ENCODE measurements at regions of chr1 and their contacts with region 1.

Region 1: GRCh38 chr1:70528590-70529333 is 117.7 kb downstream of the CTH start:
- DNase-seq: peak; percentile 20
- H3K4me3 ChIP-seq: no peak overlapping the region
- H3K27ac ChIP-seq: no peak overlapping the region
- H3K4me1 ChIP-seq: no peaks in the 10 kb centered on the region
- H3K27me3 ChIP-seq: no peaks in the 10 kb centered on the region
- CTCF ChIP-seq: peak; percentile 47 to 72

Region 2: DNA sequence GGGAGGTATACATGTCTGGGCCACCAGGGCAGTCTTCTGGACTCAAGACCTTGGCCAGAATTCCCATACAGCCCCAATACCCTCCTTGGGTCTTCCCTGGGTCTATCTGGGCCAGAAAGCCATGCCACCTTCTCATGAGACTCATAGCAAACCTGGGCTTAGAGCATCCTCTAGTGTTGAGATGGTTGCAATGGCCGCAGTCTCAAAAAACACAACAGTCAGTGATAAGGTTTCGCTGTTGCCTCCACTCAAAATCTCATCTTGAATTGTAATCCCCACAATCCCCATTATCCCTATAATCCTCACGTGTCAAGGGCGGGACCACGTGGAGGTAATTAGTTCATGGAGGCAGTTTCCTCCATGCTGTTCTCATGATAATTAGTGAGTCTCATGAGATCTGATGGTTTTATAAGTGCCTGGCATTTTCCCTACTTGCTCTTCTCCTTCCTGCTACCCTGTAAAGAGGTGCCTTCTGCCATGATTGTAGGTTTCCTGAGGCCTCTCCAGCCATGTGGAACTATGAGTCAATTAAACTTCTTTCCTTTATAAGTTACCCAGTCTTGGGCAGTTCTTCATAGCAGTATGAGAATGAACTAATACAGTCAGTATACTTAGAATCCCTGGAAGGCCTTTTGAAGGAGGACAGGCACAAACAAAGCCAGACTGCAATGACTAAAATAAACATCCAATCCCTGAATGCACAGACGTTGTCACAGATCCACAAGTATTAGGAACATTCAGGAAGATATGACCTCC is 40.7 kb before region 1 on chr1:
- CTCF ChIA-PET with region 1: no interaction called
- dilution Hi-C with region 1: no loop called
- in situ Hi-C with region 1: no loop called
- intact Hi-C with region 1: no loop called
- DNase-seq: peak; percentile 33
- H3K4me3 ChIP-seq: no peak overlapping the region
- H3K27ac ChIP-seq: no peak overlapping the region
- H3K4me1 ChIP-seq: peaks cover 19% of the 10 kb centered on the region
- H3K27me3 ChIP-seq: no peaks in the 10 kb centered on the region
- CTCF ChIP-seq: peak; percentile 84 to 85

Region 3: GRCh38 chr1:70617728-70618127 is 89.0 kb after region 1 on chr1:
- CTCF ChIA-PET with region 1: interaction called, 11 read pairs
- dilution Hi-C with region 1: no loop called
- in situ Hi-C with region 1: no loop called
- intact Hi-C with region 1: no loop called
- DNase-seq: no peak
- H3K4me3 ChIP-seq: no peak overlapping the region
- H3K27ac ChIP-seq: no peak overlapping the region
- H3K4me1 ChIP-seq: no peaks in the 10 kb centered on the region
- H3K27me3 ChIP-seq: no peaks in the 10 kb centered on the region
- CTCF ChIP-seq: peak in 1 of 2 donors; percentile 9

Region 4: GRCh38 chr1:70896224-70896623 is 367.5 kb after region 1 on chr1:
- CTCF ChIA-PET with region 1: no interaction called
- dilution Hi-C with region 1: no loop called
- in situ Hi-C with region 1: no loop called
- intact Hi-C with region 1: loop called (anchors 5 kb)
- DNase-seq: no peak
- H3K4me3 ChIP-seq: no peak overlapping the region
- H3K27ac ChIP-seq: no peak overlapping the region
- H3K4me1 ChIP-seq: no peaks in the 10 kb centered on the region
- H3K27me3 ChIP-seq: no peaks in the 10 kb centered on the region
- CTCF ChIP-seq: peak in 1 of 2 donors; percentile 48